Activated CD8-positive, alpha-beta T cell treated with anti-CD3 and anti-CD28 coated beads, Interleukin-2, amount 10 ng/mL, durations not matched to agents 7 days and 5 days (primary cell): ENCODE measurements at regions of chr9 and their contacts with region 1.

Region 1: DNA sequence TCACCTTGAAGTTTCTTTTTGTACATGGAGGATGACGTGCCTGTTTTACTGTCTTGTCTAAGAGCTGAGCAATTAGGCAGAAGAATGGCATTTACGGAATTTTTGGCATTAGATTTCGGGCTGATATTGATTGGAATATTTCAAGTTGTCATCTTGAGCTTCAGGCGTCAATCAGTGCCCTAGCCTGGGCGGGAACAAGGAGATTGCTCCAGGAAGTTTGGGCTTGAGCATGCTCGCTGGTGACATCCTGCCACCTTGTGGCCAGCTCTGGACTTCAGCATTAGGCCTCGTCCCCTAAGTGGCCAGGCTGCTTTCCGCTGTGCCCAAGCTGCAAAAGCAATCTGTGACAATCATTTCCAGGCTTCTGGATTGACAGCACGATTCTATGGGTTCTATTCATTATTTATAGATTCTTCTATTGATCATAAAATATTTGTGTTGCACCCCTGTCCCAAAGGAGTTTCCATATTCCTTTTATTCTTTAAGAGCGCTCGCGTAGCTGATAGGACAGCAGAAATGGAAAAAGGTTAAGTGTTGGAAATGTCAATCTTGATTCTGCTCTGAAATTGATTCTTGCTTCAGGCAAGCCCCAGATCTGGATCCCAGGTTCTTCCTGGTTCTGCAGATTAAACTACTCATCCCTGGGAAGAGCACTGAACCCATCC is 79.3 kb downstream of the SLC28A3 start:
- DNase-seq: peak; percentile 63
- ATAC-seq: peak; percentile 67
- H3K4me3 Mint-ChIP-seq: no peak overlapping the region
- H3K27ac Mint-ChIP-seq: no peak overlapping the region
- H3K4me1 Mint-ChIP-seq: peaks cover 9% of the 10 kb centered on the region
- H3K27me3 Mint-ChIP-seq: peaks cover 20% of the 10 kb centered on the region

Region 2: GRCh38 chr9:84216151-84216550 is 45.1 kb before region 1 on chr9:
- CTCF ChIA-PET with region 1: no interaction called
- POLR2A ChIA-PET with region 1: no interaction called
- DNase-seq: no peak
- ATAC-seq: no peak
- H3K4me3 Mint-ChIP-seq: no peak overlapping the region
- H3K27ac Mint-ChIP-seq: no peak overlapping the region
- H3K4me1 Mint-ChIP-seq: no peaks in the 10 kb centered on the region
- H3K27me3 Mint-ChIP-seq: peaks cover 7% of the 10 kb centered on the region

Region 3: DNA sequence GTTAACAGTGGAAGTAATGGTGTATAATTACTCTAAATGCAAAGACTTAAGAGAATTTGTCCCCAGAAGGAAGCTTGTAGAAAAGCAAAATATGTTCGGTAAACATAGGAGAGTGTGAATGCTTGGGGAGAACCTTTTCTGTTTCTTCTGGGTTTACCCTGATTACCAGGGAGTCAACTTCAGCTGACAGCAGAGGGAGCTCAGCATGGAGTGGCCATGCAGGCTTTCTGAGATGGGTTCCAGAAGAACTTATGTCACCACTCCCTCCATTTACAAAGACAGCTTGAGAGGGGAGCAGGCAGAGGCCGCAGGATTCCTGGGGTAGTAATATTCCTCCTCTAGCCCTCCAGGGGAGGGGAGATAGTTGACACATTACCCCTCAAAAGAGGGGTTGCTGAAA is 16.4 kb before region 1 on chr9:
- CTCF ChIA-PET with region 1: interaction called, 10 read pairs
- POLR2A ChIA-PET with region 1: no interaction called
- DNase-seq: no peak
- ATAC-seq: no peak
- H3K4me3 Mint-ChIP-seq: no peak overlapping the region
- H3K27ac Mint-ChIP-seq: no peak overlapping the region
- H3K4me1 Mint-ChIP-seq: no peaks in the 10 kb centered on the region
- H3K27me3 Mint-ChIP-seq: peaks cover 12% of the 10 kb centered on the region

Region 4: GRCh38 chr9:84278130-84278529 is 16.9 kb after region 1 on chr9:
- CTCF ChIA-PET with region 1: interaction called, 12 read pairs
- POLR2A ChIA-PET with region 1: no interaction called
- DNase-seq: no peak
- ATAC-seq: no peak
- H3K4me3 Mint-ChIP-seq: no peak overlapping the region
- H3K27ac Mint-ChIP-seq: no peak overlapping the region
- H3K4me1 Mint-ChIP-seq: no peaks in the 10 kb centered on the region
- H3K27me3 Mint-ChIP-seq: peaks cover 26% of the 10 kb centered on the region

Region 5: DNA sequence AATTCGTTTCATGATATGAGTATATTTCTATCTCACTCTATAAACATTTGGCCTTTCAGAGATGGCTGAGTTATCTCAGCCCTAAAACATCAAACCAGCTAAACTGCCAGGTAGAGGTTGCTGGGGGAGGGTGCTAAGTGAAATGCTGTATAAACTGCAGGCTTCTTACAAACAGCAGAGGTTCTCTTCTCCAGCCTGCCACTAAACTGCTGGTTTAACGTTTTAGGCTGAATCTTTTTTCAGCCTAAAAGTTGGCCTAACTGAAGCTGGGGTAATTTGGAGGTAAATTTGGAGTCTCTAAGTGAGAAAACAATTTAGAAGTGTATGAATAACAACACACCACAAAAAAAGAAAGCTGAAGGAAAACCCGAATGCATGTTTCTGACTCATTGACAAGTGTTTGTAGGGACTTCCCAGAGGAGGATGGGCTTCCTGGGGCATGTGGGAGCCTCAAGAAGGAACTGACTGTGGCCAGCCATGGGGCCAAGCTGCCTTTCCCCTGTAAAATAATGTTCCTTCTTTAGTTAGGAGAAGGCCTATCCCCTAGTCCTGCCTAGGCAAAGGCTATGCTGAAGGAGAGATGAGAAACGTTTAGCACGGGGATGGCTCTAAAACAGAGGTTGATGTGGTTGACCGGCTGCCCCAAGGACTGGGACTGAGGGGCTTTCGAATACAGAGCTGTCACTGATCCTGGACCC is 35.1 kb after region 1 on chr9:
- CTCF ChIA-PET with region 1: interaction called, 49 read pairs
- POLR2A ChIA-PET with region 1: interaction called, 12 read pairs
- DNase-seq: peak; percentile 34
- ATAC-seq: peak; percentile 50
- H3K4me3 Mint-ChIP-seq: peak overlapping the region; percentile 15
- H3K27ac Mint-ChIP-seq: peak overlapping the region; percentile 81
- H3K4me1 Mint-ChIP-seq: peaks cover 64% of the 10 kb centered on the region
- H3K27me3 Mint-ChIP-seq: no peaks in the 10 kb centered on the region

Region 6: GRCh38 chr9:84315278-84315877 is 54.2 kb after region 1 on chr9:
- CTCF ChIA-PET with region 1: interaction called, 38 read pairs
- POLR2A ChIA-PET with region 1: no interaction called
- DNase-seq: peak; percentile 67
- ATAC-seq: peak; percentile 73
- H3K4me3 Mint-ChIP-seq: no peak overlapping the region
- H3K27ac Mint-ChIP-seq: no peak overlapping the region
- H3K4me1 Mint-ChIP-seq: peaks cover 4% of the 10 kb centered on the region
- H3K27me3 Mint-ChIP-seq: no peaks in the 10 kb centered on the region

Region 7: GRCh38 chr9:84404095-84404686 is 143.0 kb after region 1 on chr9:
- CTCF ChIA-PET with region 1: no interaction called
- POLR2A ChIA-PET with region 1: no interaction called
- DNase-seq: no peak
- ATAC-seq: no peak
- H3K4me3 Mint-ChIP-seq: no peak overlapping the region
- H3K27ac Mint-ChIP-seq: no peak overlapping the region
- H3K4me1 Mint-ChIP-seq: no peaks in the 10 kb centered on the region
- H3K27me3 Mint-ChIP-seq: no peaks in the 10 kb centered on the region